ENCODE measurements at regions of chr14 and their contacts with region 1.

Region 1: DNA sequence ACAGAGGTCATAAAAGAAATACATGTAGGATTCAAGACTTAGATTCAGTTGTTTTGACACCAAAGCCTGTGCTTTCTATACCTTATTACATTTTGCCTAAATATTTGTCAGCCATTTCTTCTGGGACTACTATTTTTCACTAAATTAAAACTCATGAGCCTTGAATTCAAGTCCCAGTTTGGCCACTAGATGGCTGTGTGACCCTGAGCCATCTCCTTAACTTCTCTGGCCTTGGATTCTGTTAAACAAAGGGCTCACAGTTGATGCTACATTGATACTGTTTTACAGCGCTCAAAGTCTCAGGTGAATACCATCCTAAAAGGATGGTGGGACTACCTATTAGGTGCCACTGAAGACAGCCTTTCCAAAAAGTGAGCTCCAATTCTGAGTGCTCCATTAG is 39.6 kb upstream of the CCDC198 start:
- DNase-seq: no peak
- H3K4me3 ChIP-seq: no peak overlapping the region
- H3K27ac ChIP-seq: no peak overlapping the region
- H3K4me1 ChIP-seq: no peaks in the 10 kb centered on the region
- H3K27me3 ChIP-seq: no peaks in the 10 kb centered on the region
- CTCF ChIP-seq: peak; percentile 44 to 47

Region 2: DNA sequence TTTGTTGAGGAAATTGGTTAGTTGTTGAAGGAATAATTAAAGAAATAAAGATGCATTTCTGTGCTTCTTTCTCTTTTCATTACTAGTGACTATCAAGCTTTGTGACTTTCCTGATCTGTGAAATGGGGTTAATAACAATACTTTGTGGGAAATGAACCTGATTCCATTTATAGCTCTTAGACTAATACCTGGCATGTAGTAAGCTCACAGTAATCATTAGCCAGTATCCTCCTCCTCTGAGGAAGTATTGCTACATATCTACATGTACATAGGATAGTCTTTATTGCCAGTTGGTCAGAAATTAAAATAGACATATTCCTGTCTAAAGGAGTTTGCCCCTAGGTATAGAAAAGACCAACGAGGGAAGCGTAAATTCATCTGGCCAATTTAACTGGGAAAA is 37.8 kb before region 1 on chr14:
- CTCF ChIA-PET with region 1: no interaction called
- dilution Hi-C with region 1: loop called (anchors 5 kb)
- in situ Hi-C with region 1: no loop called
- intact Hi-C with region 1: no loop called
- DNase-seq: no peak
- H3K4me3 ChIP-seq: no peak overlapping the region
- H3K27ac ChIP-seq: no peak overlapping the region
- H3K4me1 ChIP-seq: no peaks in the 10 kb centered on the region
- H3K27me3 ChIP-seq: peaks cover 4% of the 10 kb centered on the region
- CTCF ChIP-seq: no peak